ENCODE measurements at regions of chr21 and their contacts with region 1.

Region 1: DNA sequence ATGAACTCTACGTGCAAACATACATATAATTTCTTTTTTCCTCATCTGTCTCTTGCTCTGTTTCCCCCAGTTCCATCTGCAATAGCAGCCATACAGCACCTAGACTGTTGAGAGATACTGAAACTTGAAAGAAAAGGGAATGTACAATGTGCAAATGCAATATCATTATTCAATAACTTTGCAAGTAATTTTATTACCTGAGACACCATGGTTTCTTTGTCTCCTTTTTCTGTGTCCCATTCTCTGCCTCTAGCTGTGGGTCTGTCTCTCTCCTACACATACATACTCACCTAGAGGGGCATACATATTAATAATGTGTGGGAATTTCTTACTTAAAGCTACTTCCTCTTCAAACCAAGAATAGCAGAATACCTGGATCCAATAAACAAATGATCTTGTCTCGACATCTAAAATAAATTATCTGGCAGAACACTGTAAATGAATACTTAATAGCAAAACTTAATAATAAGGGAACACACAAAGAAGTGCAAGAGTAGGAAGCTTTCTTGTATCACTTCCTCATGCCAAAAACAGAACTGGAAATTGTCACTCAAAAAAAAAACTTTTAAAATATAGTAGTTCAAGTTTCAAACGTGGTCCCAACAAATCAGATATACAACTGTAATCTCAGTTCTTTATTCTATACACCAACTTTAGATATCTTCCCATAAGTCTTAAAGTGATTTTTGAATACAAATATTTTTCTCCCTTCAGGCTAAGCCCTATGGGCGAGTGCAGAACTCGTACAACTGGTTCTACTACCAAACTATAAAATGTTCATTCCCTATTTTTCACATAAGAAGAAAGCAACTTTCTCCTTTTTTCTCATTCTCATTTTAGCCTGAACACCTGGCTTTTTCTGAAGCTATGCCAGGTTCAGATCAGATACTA is 194.6 kb downstream of the NRIP1 start:
- DNase-seq: no peak
- ATAC-seq: peak; percentile 66
- H3K4me3 Mint-ChIP-seq: peak overlapping the region; percentile 55
- H3K27ac Mint-ChIP-seq: peak overlapping the region; percentile 51
- H3K4me1 Mint-ChIP-seq: peaks cover 58% of the 10 kb centered on the region
- H3K27me3 Mint-ChIP-seq: no peaks in the 10 kb centered on the region
- CTCF ChIP-seq: no peak

Region 2: DNA sequence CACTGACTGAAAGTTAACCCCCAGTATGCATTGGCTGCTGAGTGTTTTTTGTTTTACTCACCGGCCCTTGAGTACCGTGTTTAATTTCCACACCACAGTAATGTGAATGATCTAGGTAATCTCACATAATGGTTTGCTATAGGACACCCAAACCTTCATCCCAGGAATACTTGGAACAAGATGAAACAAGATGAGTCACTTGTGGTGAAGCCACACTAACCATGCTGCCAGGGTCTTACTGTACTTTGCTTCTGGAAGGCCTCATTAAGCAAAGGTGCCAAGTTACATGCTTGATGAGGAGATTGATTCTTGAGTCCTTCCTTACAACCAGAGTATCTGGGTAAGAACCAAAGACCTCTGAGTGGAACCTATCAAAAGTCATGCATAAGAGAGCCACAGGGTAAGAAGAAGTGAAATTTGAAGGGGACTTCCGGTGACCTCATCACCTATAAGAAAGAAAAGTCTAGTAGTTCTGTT is 31.3 kb after region 1 on chr21:
- CTCF ChIA-PET with region 1: no interaction called
- POLR2A ChIA-PET with region 1: no interaction called
- intact Hi-C with region 1: loop called (anchors 2 kb)
- DNase-seq: no peak
- ATAC-seq: peak; percentile 99
- H3K4me3 Mint-ChIP-seq: no peak overlapping the region
- H3K27ac Mint-ChIP-seq: peak overlapping the region; percentile 54
- H3K4me1 Mint-ChIP-seq: peaks cover 25% of the 10 kb centered on the region
- H3K27me3 Mint-ChIP-seq: no peaks in the 10 kb centered on the region
- CTCF ChIP-seq: no peak